ENCODE measurements at regions of chr19 and their contacts with region 1.

Region 1: DNA sequence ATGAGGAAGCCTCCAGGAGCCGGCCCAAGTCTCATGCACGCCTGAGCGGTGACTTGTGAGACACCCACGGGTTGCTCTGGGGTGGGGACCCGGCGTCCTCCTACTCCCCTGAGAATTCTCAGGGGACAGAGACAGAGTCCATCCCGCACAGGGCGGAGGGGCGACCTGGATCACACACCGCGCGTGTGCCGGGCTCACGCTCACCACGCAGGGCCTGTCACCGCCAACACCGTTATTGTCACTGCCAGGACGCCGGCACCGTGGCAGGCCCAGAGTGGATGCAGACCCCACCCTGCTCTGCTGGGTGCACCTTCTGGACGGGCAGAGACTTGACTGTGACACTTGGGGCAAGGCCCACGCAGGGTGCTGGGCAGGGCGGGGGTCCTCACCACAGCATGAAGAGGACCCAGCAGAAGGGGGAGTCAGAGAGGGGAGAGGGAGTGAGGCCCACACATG is 16.3 kb downstream of the MOB3A start:
- DNase-seq: no peak
- ATAC-seq: peak; percentile 6

Region 2: DNA sequence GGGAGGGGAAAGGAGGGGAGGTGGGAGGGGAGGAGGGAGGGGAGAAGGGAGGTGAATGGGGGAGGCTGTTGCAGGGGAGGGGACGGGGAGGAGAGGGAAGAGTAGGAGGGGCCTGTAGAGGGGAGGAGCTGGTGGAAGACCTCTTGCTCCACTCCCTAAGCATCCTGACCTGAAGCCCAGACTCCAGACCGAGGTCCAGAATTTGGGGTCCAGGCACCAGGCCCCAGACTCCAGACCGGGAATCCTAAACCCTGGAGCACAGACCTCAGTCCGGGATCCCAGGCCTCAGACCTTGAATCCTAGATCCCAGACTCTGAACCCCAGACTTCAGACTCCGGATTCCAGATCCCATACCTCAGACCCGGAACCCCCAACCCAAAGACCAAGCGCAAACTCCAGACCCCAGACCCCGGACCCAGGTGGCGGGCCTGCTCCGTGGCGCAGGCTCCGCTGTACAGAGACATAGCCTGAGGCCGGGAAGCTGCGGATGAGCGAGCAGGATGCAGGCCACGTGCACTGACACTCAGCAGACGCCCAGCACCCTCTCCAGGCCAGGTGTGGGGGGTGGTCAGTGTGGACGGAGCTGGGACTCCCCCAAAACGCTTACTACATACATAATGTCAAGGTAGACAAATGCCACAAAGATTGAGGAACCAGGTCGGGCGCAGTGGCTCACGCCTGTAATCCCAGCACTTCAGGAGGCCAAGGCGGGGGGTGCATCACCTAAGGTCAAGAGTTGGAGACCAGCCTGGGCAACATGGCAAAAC is 63.6 kb before region 1 on chr19:
- intact Hi-C with region 1: loop called (anchors 5 kb)
- DNase-seq: peak; percentile 89
- ATAC-seq: peak; percentile 92

Region 3: GRCh38 chr19:2027361-2027760 is 52.5 kb before region 1 on chr19:
- intact Hi-C with region 1: no loop called
- DNase-seq: no peak
- ATAC-seq: peak; percentile 66

Measured in sciatic nerve (tissue), 2 donors.